Sciatic nerve (tissue), 2 donors: ENCODE measurements at regions of chr22 and their contacts with region 1.

Region 1: GRCh38 chr22:19909350-19910179 is 32.0 kb upstream of the COMT start:
- DNase-seq: peak; percentile 93
- ATAC-seq: peak; percentile 93

Region 2: GRCh38 chr22:19730655-19731360 is 178.8 kb before region 1 on chr22:
- intact Hi-C with region 1: loop called (anchors 2 kb)
- DNase-seq: peak; percentile 92
- ATAC-seq: peak; percentile 94

Region 3: DNA sequence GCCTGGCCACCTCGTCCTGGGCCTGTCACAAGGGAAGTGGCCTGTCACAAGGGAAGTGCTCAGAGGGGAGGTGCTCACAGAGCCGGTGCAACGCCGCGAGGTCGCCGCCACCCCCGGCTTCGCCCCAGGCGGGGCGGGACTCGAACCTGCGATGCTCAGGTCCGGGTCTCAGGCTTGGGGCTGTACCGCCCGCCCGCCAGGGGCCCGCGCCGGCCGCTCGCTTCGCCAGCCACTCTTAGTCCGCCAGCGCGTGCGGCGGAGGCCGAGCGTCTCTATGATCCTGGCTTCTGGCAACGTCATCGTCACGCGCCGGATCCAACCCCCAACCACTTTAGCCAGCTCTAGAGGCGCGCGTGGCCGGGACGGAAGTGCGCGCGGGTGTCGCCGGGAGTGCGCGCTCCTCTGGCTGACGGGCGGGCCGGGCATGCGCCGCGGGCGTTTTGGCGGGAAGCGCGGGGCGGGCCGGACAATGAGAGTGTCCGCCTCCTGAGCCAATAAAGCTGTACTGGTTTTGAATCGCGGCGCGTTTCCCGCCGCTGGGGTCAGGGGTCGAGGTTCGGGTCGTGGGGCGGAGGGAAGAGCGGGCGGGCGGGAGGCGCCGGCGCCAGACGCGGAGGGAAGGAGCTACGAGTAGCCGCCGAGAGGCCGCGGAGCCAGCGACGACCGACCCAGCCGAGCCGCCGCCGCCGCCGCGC is 207.5 kb after region 1 on chr22 and contains the start of gene TRMT2A:
- intact Hi-C with region 1: no loop called
- DNase-seq: peak; percentile 99
- ATAC-seq: peak; percentile 96
- total RNA-seq, gene TRMT2A: 46.8 TPM